ENCODE measurements at regions of chr2 and their contacts with region 1.

Region 1: DNA sequence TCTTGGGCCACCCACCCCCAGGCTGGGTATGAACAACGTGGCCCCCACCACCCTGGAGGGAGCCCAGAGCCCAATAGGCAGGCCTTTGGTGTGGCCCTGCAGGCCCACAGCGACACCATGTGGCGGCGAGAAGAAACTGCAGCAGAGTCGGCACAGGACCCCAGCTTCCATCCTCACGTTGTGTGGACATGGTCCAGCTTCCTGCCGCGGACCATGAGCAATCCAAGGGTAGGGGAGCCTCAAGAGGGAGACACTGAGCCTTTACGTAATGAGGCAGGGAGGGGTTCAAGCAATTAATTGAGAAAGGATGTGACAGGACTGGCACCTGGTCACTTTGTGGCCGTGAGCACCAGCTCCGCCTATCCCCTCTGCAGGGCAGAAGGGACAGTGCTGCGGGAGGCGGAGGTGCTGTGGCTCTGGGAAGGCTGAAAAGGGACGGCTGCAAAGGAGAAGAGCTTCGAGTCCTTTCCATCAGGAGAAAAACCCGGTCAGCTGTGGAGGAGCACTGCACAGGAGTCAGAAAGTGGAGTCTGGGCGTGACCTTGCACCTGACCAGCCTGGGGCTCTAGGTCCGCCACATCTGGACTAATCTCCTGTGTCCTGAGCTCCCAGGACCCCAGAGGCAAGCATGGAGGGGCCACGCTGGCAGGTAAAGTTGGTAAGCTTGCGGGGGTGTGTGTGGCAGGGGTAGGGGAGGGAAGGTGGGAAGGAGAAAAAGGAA is 44.8 kb downstream of the TMEM37 start:
- DNase-seq: peak; percentile 67 to 87
- H3K4me3 ChIP-seq: no peak overlapping the region
- H3K27ac ChIP-seq: no peak overlapping the region
- H3K4me1 ChIP-seq: peaks cover 0 to 14% (median 8%) of the 10 kb centered on the region in 4 experiments; a peak in 5 of 7 replicates
- H3K27me3 ChIP-seq: no peaks in the 10 kb centered on the region; a peak in 1 of 7 replicates
- CTCF ChIP-seq: peak; percentile 93 to 98 (median 98)
- EP300 ChIP-seq: no peak
- POLR2A ChIP-seq: no peak
- RAD21 ChIP-seq: peak; percentile 95 to 97

Region 2: GRCh38 chr2:119290859-119291587 is 185.4 kb before region 1 on chr2:
- CTCF ChIA-PET with region 1: interaction called, 13 read pairs
- POLR2A ChIA-PET with region 1: no interaction called
- DNase-seq: peak; percentile 66 to 89
- H3K4me3 ChIP-seq: no peak overlapping the region
- H3K27ac ChIP-seq: no peak overlapping the region
- H3K4me1 ChIP-seq: peaks cover 0 to 2% (median 0%) of the 10 kb centered on the region in 4 experiments; a peak in 2 of 7 replicates
- H3K27me3 ChIP-seq: no peaks in the 10 kb centered on the region
- CTCF ChIP-seq: peak; percentile 92 to 98 (median 98)
- EP300 ChIP-seq: no peak
- POLR2A ChIP-seq: no peak
- RAD21 ChIP-seq: peak; percentile 97 to 99

Region 3: DNA sequence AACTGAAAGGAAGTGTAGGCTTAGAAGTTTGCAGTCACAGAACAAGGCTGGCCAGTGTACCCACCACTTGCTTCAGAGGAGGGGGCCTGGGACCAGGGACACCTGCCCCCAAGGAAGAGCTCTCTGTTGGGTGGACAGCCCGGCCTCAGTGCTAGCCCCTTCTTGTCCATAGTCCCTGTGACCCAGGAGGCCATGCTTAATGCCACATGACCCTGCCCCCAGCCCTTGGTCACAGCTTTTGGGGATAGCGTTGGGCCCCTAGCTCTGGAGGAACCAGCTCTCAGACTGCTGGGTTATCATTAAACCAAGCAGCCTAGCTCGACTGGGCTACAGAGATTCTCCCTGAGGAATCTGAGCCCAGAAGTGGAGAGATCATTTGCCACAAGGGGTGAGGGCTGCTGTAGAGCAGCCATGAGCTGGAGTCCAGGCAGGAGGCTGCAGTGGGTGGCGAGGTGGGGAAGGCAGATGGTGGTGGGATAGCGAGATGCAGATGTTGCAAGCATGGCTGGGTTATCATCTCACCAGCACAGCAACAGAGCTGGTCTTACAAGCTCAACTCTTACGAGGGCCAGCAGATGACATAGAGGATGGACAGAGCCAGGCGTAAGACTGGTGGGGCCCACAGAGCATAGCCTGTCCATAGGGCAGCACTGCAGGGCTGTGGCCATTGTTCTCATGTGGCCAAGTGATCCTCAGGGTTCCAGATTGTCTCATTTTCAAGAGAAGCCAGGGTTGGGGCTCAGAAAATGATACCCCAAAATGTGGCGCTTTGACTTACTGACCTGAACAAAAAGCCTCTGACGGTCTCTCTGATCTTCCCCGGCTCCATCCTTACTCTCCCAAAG is 52.0 kb before region 1 on chr2:
- CTCF ChIA-PET with region 1: interaction called, 10 read pairs
- POLR2A ChIA-PET with region 1: interaction called, 3 read pairs
- DNase-seq: no peak
- H3K4me3 ChIP-seq: no peak overlapping the region
- H3K27ac ChIP-seq: no peak overlapping the region
- H3K4me1 ChIP-seq: peaks cover 0 to 8% (median 0%) of the 10 kb centered on the region in 4 experiments; a peak in 3 of 7 replicates
- H3K27me3 ChIP-seq: peaks cover 0 to 3% (median 0%) of the 10 kb centered on the region in 4 experiments; a peak in 3 of 7 replicates
- CTCF ChIP-seq: no peak
- EP300 ChIP-seq: no peak
- POLR2A ChIP-seq: no peak
- RAD21 ChIP-seq: no peak

Region 4: DNA sequence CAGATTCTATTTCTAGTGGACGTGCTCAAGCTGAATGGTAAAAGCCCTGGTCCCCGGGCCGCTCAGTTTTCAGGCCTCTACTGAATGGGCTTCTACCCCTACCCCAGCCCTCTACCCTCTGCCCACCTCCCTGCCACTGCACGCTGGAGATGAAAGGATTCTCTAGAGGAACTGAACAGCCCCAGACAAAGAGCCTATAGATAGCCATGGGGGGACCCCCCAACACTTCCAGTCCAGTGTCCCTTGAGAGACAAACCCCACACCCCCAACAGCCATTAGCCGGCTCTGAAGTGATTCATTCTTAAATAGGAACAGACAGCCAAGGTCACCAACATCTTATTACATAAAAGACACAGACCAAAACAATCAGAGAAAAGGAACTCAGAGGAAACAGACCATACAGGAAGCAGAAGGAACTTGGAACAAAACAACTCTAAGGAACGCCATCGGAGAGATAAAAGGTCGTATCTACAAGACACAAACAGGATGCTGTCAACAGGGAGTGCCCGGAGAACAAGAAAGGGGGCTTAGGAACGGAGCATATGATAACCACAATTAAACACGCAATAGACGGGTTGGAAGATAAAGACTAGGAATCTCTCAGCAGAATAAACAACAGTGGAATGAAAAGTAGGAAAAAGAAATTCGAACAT is 21.3 kb before region 1 on chr2:
- CTCF ChIA-PET with region 1: interaction called, 90 read pairs
- POLR2A ChIA-PET with region 1: no interaction called
- DNase-seq: no peak
- H3K4me3 ChIP-seq: no peak overlapping the region
- H3K27ac ChIP-seq: no peak overlapping the region
- H3K4me1 ChIP-seq: no peaks in the 10 kb centered on the region
- H3K27me3 ChIP-seq: 0 out of 7 replicates have a peak, but pooled peaks cover 0 to 2% (median 0%) of the 10 kb centered on the region in 4 experiments
- CTCF ChIP-seq: no peak
- EP300 ChIP-seq: no peak
- POLR2A ChIP-seq: no peak
- RAD21 ChIP-seq: no peak

Region 5: GRCh38 chr2:119494163-119494790 is 17.8 kb after region 1 on chr2:
- CTCF ChIA-PET with region 1: interaction called, 100 read pairs
- POLR2A ChIA-PET with region 1: no interaction called
- DNase-seq: no peak
- H3K4me3 ChIP-seq: no peak overlapping the region
- H3K27ac ChIP-seq: no peak overlapping the region
- H3K4me1 ChIP-seq: peaks cover 0 to 2% (median 0%) of the 10 kb centered on the region in 4 experiments; a peak in 2 of 7 replicates
- H3K27me3 ChIP-seq: no peaks in the 10 kb centered on the region
- CTCF ChIP-seq: peak in 1 of 3 experiments; percentile 31; a peak in 1 of 4 replicates
- EP300 ChIP-seq: no peak
- POLR2A ChIP-seq: no peak
- RAD21 ChIP-seq: peak; percentile 31 to 36

Region 6: GRCh38 chr2:119641562-119642258 is 165.2 kb after region 1 on chr2:
- CTCF ChIA-PET with region 1: interaction called, 14 read pairs
- POLR2A ChIA-PET with region 1: no interaction called
- DNase-seq: peak; percentile 47 to 86
- H3K4me3 ChIP-seq: no peak overlapping the region
- H3K27ac ChIP-seq: no peak overlapping the region
- H3K4me1 ChIP-seq: peaks cover 0 to 5% (median 2%) of the 10 kb centered on the region in 4 experiments; a peak in 2 of 7 replicates
- H3K27me3 ChIP-seq: no peaks in the 10 kb centered on the region; a peak in 1 of 7 replicates
- CTCF ChIP-seq: peak; percentile 95 to 99 (median 99)
- EP300 ChIP-seq: no peak
- POLR2A ChIP-seq: no peak
- RAD21 ChIP-seq: peak; percentile 92 to 96